Body of pancreas (tissue), 4 donors: ENCODE measurements at regions of chr19 and their contacts with region 1.

Region 1: DNA sequence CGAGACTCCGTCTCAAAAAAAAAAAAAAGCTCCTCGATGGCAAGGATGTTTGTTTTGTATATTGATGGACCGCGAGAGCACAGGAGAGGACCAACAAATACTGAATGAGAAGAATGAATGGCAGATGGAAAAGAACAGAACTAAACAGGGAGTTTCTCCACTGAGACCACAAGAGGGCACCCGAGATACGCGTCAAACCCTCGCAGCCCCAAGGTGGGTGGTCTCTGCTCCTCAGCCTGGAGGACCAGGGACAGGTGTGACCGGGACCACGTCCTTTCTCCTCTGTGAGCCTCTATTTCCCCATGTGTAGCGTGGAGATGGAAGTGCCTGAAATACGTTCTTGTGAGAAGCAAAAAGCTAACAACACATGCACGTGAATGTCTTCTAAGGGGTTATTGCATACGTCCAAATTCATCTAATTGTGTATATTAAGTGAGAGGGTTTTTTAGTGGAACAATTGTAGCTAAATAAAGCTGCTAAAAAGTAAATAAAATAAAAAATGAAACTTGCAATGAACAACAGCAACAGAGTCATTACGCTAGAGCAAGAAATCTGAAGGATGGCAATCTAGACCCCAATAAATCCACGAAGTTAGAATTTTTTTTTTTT is 8.3 kb upstream of the CDC42EP5 start:
- DNase-seq: peak in 2 of 4 donors; percentile 26 to 32
- ATAC-seq: no peak
- H3K4me3 ChIP-seq: no peak overlapping the region
- H3K27ac ChIP-seq: no peak overlapping the region
- H3K4me1 ChIP-seq: no peaks in the 10 kb centered on the region
- H3K27me3 ChIP-seq: peaks cover 0 to 5% of the 10 kb centered on the region in 2 donors
- CTCF ChIP-seq: peak; percentile 28 to 56 (median 48)
- POLR2A ChIP-seq: no peak

Region 2: GRCh38 chr19:54297760-54298305 is 183.6 kb before region 1 on chr19:
- intact Hi-C with region 1: no loop called
- DNase-seq: no peak
- ATAC-seq: no peak
- H3K4me3 ChIP-seq: no peak overlapping the region
- H3K27ac ChIP-seq: no peak overlapping the region
- H3K4me1 ChIP-seq: no peaks in the 10 kb centered on the region
- H3K27me3 ChIP-seq: no peaks in the 10 kb centered on the region
- CTCF ChIP-seq: no peak
- POLR2A ChIP-seq: no peak

Region 3: GRCh38 chr19:54674021-54674617 is 192.7 kb after region 1 on chr19:
- intact Hi-C with region 1: loop called (anchors 10 kb)
- DNase-seq: no peak
- ATAC-seq: no peak
- H3K4me3 ChIP-seq: no peak overlapping the region
- H3K27ac ChIP-seq: no peak overlapping the region
- H3K4me1 ChIP-seq: no peaks in the 10 kb centered on the region
- H3K27me3 ChIP-seq: no peaks in the 10 kb centered on the region
- CTCF ChIP-seq: peak in 6 of 7 experiments; percentile 16 to 41 (median 32)
- POLR2A ChIP-seq: no peak